Activated CD8-positive, alpha-beta T cell treated with anti-CD3 and anti-CD28 coated beads for 36 hours (primary cell): ENCODE measurements at regions of chr19 and their contacts with region 1.

Region 1: DNA sequence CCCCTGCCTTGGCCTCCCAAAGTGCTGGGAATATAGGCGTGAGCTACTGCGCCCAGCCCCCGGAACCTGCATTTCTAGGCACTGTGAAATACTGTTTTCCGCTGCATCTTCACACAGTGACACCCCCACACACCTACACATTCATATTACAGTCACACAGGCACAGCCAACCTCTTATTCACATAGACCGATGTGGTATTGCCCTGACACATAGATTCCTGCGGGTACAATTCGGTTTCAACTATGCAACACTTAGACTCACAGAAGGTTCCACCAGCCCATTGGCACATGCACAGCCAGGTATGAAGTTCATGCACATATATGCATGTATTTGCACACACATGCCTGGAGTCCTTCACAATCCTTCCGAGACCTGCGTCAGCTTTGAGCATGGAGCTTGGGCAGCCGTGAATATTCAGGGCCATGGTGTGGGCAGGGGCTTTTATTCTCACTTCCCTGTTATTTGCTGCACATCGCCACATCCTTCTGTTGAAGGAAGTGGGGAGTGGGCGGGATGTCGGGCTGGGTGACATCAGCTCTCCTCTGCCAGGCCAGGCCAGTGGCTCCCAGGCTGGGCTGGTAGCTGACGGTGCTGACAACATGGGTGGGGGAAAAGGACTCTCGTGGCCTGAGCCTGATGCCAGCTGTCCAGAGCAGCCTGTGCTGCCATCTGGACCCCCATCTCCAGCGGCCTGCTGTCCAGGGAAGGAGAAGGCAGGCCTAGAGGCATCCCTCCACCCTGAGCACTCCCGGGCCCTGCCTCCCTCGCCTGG is 5.4 kb upstream of the CDC37 start:
- DNase-seq: peak; percentile 93
- ATAC-seq: peak; percentile 62
- H3K4me3 Mint-ChIP-seq: peak overlapping the region; percentile 33
- H3K27ac Mint-ChIP-seq: peak overlapping the region; percentile 95
- H3K4me1 Mint-ChIP-seq: peaks cover 81% of the 10 kb centered on the region
- H3K27me3 Mint-ChIP-seq: no peaks in the 10 kb centered on the region
- CTCF ChIP-seq: no peak

Region 2: DNA sequence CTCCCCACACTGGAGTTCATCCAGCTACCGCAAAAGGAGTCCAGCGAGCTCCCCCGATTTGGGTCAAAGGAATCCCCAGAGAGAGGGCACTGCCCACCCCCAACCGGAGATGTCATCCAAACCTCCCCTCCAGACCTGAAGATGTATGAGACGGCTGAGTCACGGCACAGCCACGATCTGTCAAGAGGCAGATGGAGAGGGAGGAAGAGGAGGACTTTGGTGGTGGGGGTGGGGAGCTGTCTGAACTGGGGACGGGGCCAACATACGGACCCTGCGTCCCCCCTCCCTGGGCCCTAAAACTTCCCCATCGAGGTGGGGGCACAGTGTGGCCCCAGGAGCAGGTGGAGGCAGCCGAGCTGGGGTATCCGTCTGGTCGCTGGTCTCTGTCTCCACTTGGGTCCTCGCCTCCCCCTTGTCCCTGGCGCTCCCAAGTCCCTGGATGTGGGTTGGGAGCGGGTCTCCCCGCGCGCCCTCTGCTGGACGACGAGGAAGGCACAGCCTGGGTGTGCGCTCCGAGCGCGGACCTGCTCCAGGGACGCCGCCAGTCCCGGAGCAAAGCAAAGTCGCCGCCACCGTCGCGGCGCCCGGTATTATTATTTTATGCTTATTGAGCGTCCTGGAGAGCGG is 15.4 kb after region 1 on chr19:
- CTCF ChIA-PET with region 1: interaction called, 587 read pairs
- POLR2A ChIA-PET with region 1: interaction called, 161 read pairs
- intact Hi-C with region 1: loop called (anchors 2 kb)
- DNase-seq: peak; percentile 83
- ATAC-seq: peak; percentile 10
- H3K4me3 Mint-ChIP-seq: peak overlapping the region; percentile 71
- H3K27ac Mint-ChIP-seq: peak overlapping the region; percentile 97
- H3K4me1 Mint-ChIP-seq: peaks cover 76% of the 10 kb centered on the region
- H3K27me3 Mint-ChIP-seq: peaks cover 22% of the 10 kb centered on the region
- CTCF ChIP-seq: peak; percentile 97